ENCODE measurements at regions of chrX and their contacts with region 1.

Region 1: DNA sequence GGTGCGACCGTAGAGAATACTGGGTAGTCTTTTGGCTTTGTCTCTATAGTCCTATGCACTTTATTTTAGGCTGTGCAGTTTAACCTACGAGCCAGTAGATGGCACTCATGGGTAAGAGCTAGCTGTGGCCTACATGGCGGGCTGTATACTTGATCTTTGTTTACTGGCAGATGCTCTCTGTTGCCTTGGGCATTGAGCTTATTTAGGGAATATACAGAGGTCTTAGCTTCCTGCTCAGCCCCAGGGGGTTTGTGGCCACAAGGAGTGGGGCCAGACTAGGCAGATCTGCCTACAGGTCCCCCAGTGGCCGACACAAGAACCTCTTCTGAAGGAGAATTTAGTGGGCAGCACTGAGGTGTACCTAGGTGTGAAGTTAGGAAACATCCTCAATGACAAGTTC is 227.6 kb upstream of the HDX start:
- DNase-seq: peak; percentile 10 to 16 (median 16)
- ATAC-seq: peak; percentile 81
- H3K4me3 ChIP-seq: no peak overlapping the region
- H3K27ac ChIP-seq: no peak overlapping the region
- H3K4me1 ChIP-seq: no peaks in the 10 kb centered on the region
- H3K27me3 ChIP-seq: no peaks in the 10 kb centered on the region
- CTCF ChIP-seq: peak; percentile 63 to 73 (median 64)
- EP300 ChIP-seq: no peak
- POLR2A ChIP-seq: no peak
- RAD21 ChIP-seq: peak; percentile 62 to 67

Region 2: GRCh38 chrX:84790780-84791179 is 61.0 kb after region 1 on chrX:
- CTCF ChIA-PET with region 1: no interaction called
- POLR2A ChIA-PET with region 1: no interaction called
- in situ Hi-C with region 1: no loop called
- intact Hi-C with region 1: no loop called
- DNase-seq: no peak
- ATAC-seq: no peak
- H3K4me3 ChIP-seq: no peak overlapping the region
- H3K27ac ChIP-seq: no peak overlapping the region
- H3K4me1 ChIP-seq: no peaks in the 10 kb centered on the region
- H3K27me3 ChIP-seq: no peaks in the 10 kb centered on the region
- CTCF ChIP-seq: no peak
- EP300 ChIP-seq: no peak
- POLR2A ChIP-seq: no peak
- RAD21 ChIP-seq: no peak

Region 3: DNA sequence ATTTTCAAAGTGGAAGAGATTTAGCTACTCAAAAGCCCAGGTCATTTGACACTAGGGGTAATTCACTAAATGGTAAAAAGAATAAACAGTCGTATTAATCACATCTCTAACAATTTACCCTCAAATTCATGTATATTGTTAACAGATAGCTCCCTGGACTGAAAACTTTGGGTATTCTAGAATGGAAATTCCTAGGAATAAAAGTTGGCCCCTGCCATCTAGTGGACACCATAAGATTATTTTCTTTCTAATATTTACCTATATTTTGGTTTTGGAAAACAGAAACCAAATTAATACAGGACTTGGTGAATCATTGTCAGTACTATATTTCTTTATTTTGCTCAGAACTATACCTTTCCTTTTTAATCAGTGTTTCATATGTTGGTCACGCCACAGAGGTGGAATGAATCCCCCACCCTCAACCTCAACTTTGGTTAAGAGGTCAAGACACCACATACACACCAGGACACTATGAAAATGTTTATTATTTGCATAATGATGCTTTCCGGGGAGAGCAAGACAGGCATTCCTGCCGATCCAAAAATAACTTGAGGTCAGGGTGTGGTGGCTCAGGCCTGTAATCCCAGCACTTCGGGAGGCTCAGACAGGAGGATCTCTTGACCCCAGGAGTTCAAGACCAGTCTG is 177.6 kb after region 1 on chrX:
- CTCF ChIA-PET with region 1: no interaction called
- POLR2A ChIA-PET with region 1: no interaction called
- in situ Hi-C with region 1: no loop called
- intact Hi-C with region 1: loop called (anchors 2 kb)
- DNase-seq: peak in 1 of 4 experiments; percentile 3
- ATAC-seq: no peak
- H3K4me3 ChIP-seq: no peak overlapping the region
- H3K27ac ChIP-seq: no peak overlapping the region
- H3K4me1 ChIP-seq: no peaks in the 10 kb centered on the region
- H3K27me3 ChIP-seq: no peaks in the 10 kb centered on the region
- CTCF ChIP-seq: peak in 1 of 3 experiments; percentile 21; a peak in 2 of 6 replicates
- EP300 ChIP-seq: no peak
- POLR2A ChIP-seq: no peak
- RAD21 ChIP-seq: peak in 1 of 2 experiments; percentile 31; a peak in 2 of 4 replicates

Region 4: DNA sequence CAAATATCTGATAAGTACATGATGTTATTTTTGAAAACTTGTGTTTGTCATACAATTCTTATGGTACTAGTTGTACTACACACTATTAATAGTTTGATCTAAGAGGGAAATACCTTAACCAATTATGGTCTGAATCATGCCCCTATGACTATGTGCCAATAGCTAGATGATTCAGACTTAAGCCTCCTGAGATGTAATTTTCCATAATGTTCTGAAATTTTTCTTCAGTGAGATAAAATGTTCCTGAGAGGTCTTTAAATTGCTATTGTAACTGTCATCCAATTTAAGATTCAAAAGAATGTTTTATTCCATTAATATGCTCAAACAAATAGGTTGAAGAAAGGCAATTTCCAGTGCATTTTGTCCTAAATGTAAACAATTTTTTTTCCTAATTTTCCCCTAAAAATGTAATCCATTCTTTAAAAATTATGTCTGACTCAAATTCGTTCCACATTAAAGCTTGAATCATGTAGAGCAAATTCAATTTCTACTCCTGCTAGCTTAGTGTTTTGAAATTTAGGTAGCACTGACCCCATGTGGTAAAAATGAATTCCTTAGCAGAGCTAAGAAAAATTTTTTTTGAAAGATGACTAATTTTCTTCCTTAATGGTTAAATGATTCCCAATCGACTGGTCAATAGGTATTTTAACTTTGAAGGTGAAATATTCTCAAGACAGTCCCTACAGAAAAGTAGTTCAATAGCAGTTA is 323.0 kb after region 1 on chrX:
- CTCF ChIA-PET with region 1: no interaction called
- POLR2A ChIA-PET with region 1: no interaction called
- in situ Hi-C with region 1: no loop called
- intact Hi-C with region 1: loop called (anchors 1 kb)
- DNase-seq: peak in 1 of 4 experiments; percentile 2
- ATAC-seq: no peak
- H3K4me3 ChIP-seq: no peak overlapping the region
- H3K27ac ChIP-seq: no peak overlapping the region
- H3K4me1 ChIP-seq: no peaks in the 10 kb centered on the region
- H3K27me3 ChIP-seq: no peaks in the 10 kb centered on the region
- CTCF ChIP-seq: peak in 1 of 3 experiments; percentile 41; a peak in 2 of 6 replicates
- EP300 ChIP-seq: no peak
- POLR2A ChIP-seq: no peak
- RAD21 ChIP-seq: peak in 1 of 2 experiments; percentile 52; a peak in 3 of 4 replicates

Region 5: GRCh38 chrX:85111347-85111746 is 381.5 kb after region 1 on chrX:
- CTCF ChIA-PET with region 1: no interaction called
- POLR2A ChIA-PET with region 1: no interaction called
- in situ Hi-C with region 1: no loop called
- intact Hi-C with region 1: loop called (anchors 2 kb)
- DNase-seq: peak; percentile 4 to 14 (median 10)
- ATAC-seq: no peak
- H3K4me3 ChIP-seq: no peak overlapping the region
- H3K27ac ChIP-seq: no peak overlapping the region
- H3K4me1 ChIP-seq: no peaks in the 10 kb centered on the region
- H3K27me3 ChIP-seq: no peaks in the 10 kb centered on the region
- CTCF ChIP-seq: peak in 2 of 3 experiments; percentile 41 to 61; a peak in 3 of 6 replicates
- EP300 ChIP-seq: no peak
- POLR2A ChIP-seq: no peak
- RAD21 ChIP-seq: peak in 1 of 2 experiments; percentile 65; a peak in 3 of 4 replicates